Endothelial cell of umbilical vein (primary cell): ENCODE measurements at regions of chr6 and their contacts with region 1.

Region 1: DNA sequence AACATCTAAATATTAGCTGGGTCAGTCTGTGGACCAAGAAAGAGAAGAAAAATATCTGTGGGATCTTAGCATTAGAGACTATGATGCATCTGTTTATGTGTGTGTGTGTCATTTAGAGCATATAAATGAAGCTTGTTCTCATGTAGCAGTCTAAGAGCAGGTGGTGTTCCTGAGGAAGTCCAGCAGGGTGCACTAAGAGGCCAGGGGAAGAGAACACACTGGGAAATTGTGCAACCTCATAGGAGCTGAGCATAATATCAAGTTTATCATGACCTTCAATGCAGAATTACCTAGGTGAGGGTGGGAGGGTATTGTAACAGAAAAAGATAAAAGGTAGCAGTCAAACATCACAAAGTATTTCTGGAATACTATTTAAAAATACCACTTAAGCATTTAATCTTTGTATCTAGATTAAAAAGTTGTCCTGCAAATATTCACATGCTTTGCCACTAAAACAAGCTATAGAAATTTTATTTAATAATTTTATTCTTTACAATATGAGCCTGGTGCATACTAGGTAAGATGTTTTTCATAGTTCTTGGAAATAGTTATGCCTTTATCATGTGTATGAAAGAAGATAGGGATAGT is 80.5 kb downstream of the SMPDL3A start:
- DNase-seq: peak; percentile 26
- H3K4me3 ChIP-seq: no peak overlapping the region
- H3K27ac ChIP-seq: no peak overlapping the region
- H3K4me1 ChIP-seq: no peaks in the 10 kb centered on the region
- H3K27me3 ChIP-seq: no peaks in the 10 kb centered on the region
- CTCF ChIP-seq: peak; percentile 13 to 37
- POLR2A ChIP-seq: no peak

Region 2: DNA sequence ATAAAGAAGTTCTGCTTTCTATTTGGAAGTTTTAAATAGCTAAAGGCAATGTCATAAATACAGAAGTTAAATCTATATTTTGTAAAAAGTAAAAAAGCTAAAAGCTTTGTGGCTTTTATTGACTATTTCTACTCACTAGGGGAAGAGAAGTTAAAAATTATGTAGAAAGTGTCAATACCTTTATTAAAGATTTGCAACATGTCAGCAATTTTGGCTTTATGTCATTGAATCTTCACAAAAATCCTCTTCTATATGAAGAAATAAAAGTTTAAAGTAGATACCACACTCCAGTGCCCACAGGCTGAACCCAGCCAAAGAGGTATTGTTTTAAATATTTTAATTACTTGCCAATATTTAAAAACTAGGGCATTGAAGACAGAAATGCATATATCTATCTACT is 630.7 kb before region 1 on chr6:
- CTCF ChIA-PET with region 1: no interaction called
- POLR2A ChIA-PET with region 1: no interaction called
- dilution Hi-C with region 1: no loop called
- intact Hi-C with region 1: no loop called
- DNase-seq: no peak
- H3K4me3 ChIP-seq: no peak overlapping the region
- H3K27ac ChIP-seq: no peak overlapping the region
- H3K4me1 ChIP-seq: no peaks in the 10 kb centered on the region
- H3K27me3 ChIP-seq: no peaks in the 10 kb centered on the region
- CTCF ChIP-seq: no peak
- POLR2A ChIP-seq: no peak

Region 3: DNA sequence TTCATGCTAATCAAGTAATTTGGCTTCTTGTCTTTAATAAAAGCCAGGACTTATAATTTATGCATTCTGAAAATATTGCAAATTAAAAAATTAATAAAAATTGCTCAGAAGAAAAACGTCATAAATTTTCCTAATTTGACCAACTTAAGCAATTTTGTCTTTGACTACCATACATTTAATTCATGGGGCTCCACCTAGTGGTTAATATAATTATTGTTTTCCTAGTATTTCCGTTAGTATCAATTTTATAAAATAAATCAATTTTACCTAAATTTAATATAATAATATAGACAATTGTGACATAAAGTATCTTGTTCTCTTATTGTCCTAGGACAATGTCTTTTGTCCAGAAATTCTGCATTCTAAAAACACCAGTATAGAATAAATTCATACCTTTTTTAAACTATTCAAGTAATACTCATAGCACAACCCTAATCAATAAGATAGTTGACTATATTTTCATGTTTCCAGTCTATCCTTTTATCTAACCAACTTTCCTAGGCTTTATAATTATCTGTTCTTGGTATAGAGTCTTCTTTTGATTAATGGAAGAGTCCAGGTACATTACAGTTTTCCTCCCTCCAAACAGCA is 447.3 kb after region 1 on chr6:
- CTCF ChIA-PET with region 1: interaction called, 39 read pairs
- POLR2A ChIA-PET with region 1: no interaction called
- dilution Hi-C with region 1: no loop called
- intact Hi-C with region 1: loop called (anchors 1 kb)
- DNase-seq: peak; percentile 14
- H3K4me3 ChIP-seq: no peak overlapping the region
- H3K27ac ChIP-seq: no peak overlapping the region
- H3K4me1 ChIP-seq: no peaks in the 10 kb centered on the region
- H3K27me3 ChIP-seq: peaks cover 0 to 3% of the 10 kb centered on the region in 2 experiments
- CTCF ChIP-seq: no peak
- POLR2A ChIP-seq: no peak

Region 4: GRCh38 chr6:123343836-123344235 is 474.3 kb after region 1 on chr6:
- CTCF ChIA-PET with region 1: no interaction called
- POLR2A ChIA-PET with region 1: no interaction called
- dilution Hi-C with region 1: no loop called
- intact Hi-C with region 1: no loop called
- DNase-seq: no peak
- H3K4me3 ChIP-seq: no peak overlapping the region
- H3K27ac ChIP-seq: no peak overlapping the region
- H3K4me1 ChIP-seq: no peaks in the 10 kb centered on the region
- H3K27me3 ChIP-seq: no peaks in the 10 kb centered on the region
- CTCF ChIP-seq: no peak
- POLR2A ChIP-seq: no peak

Region 5: DNA sequence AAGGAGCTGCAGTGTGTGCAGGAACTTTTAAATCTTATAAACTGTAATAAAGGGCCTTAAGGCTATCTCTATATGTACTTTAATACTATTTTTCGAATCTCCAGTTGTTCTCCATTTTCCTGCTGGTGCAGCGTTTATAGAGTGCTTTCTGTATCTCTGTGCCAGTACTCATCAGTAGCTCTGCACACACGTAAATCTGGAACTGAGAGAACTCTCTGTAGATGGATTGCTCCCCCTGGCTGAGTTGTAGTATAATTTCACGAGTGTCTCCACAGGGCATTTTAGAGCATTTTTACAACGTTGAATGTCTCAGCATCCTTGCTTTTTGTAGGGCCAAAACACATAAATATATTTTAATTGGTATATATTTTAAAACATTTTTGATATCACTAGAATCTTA is 510.7 kb after region 1 on chr6:
- CTCF ChIA-PET with region 1: interaction called, 26 read pairs
- POLR2A ChIA-PET with region 1: no interaction called
- dilution Hi-C with region 1: no loop called
- intact Hi-C with region 1: loop called (anchors 1 kb)
- DNase-seq: peak; percentile 6
- H3K4me3 ChIP-seq: no peak overlapping the region
- H3K27ac ChIP-seq: no peak overlapping the region
- H3K4me1 ChIP-seq: no peaks in the 10 kb centered on the region
- H3K27me3 ChIP-seq: no peaks in the 10 kb centered on the region
- CTCF ChIP-seq: peak in 1 of 2 donors; percentile 10
- POLR2A ChIP-seq: no peak

Region 6: GRCh38 chr6:124854338-124854922 is 1984.9 kb after region 1 on chr6:
- CTCF ChIA-PET with region 1: no interaction called
- POLR2A ChIA-PET with region 1: no interaction called
- dilution Hi-C with region 1: no loop called
- intact Hi-C with region 1: loop called (anchors 5 kb)
- DNase-seq: peak; percentile 16
- H3K4me3 ChIP-seq: no peak overlapping the region
- H3K27ac ChIP-seq: no peak overlapping the region
- H3K4me1 ChIP-seq: no peaks in the 10 kb centered on the region
- H3K27me3 ChIP-seq: peaks cover 0 to 3% of the 10 kb centered on the region in 2 experiments
- CTCF ChIP-seq: no peak
- POLR2A ChIP-seq: no peak